ENCODE measurements at regions of chr6 and their contacts with region 1.

Region 1: GRCh38 chr6:118709859-118710350 is 58.5 kb upstream of the CEP85L start:
- DNase-seq: no peak
- H3K4me3 ChIP-seq: peak overlapping the region; percentile 35 to 50
- H3K27ac ChIP-seq: peak overlapping the region; percentile 68 to 69
- H3K4me1 ChIP-seq: peaks cover 0 to 37% (median 17%) of the 10 kb centered on the region in 4 donors
- H3K27me3 ChIP-seq: no peaks in the 10 kb centered on the region
- CTCF ChIP-seq: no peak

Region 2: GRCh38 chr6:118659513-118660217 is 50.2 kb before region 1 on chr6:
- intact Hi-C with region 1: loop called (anchors 5 kb)
- DNase-seq: no peak
- H3K4me3 ChIP-seq: no peak overlapping the region
- H3K27ac ChIP-seq: no peak overlapping the region
- H3K4me1 ChIP-seq: peaks cover 0 to 13% (median 5%) of the 10 kb centered on the region in 4 donors
- H3K27me3 ChIP-seq: no peaks in the 10 kb centered on the region
- CTCF ChIP-seq: no peak

Region 3: DNA sequence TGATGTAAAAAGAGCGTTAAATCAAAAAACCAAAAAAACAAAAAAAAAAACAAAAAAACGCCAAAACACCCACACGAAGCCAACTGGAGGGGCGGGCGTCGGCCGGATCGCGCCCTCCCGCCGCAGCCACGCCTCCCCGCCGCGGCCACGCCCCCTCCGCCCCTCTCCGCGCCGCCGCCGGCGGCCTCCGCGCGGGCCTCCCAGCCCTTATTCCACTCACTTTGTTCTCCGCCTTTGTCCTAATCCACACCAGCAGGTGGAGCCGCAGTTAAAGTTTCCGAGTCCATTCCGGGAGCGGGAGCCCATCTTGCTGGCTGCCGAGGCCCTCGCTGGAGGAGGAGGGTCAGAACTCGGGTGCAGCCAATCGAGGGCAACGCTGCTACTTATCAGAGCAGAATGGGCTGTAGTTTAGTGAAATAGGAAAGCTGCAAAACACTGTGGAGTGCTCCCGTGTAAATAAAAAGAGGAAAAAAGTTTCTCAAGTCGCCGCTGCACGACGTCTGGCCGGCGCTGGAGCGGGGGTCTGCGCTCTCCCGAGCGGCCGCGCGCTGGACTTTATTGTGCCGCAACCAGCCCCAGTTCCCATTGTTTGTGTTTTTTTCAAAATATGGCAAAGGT is 184.0 kb after region 1 on chr6 and contains the start of gene ASF1A:
- intact Hi-C with region 1: no loop called
- DNase-seq: peak; percentile 98 to 99
- H3K4me3 ChIP-seq: peak within 1 kb of the TSS; percentile 76 to 91
- H3K27ac ChIP-seq: peak within 1 kb of the TSS; percentile 87 to 95
- H3K4me1 ChIP-seq: peaks cover 0 to 41% (median 13%) of the 10 kb centered on the region in 4 donors
- H3K27me3 ChIP-seq: no peaks in the 10 kb centered on the region
- CTCF ChIP-seq: peak; percentile 42 to 61

Measured in tibial artery (tissue), 4 donors.